A549 (cell line): ENCODE measurements at regions of chr21 and their contacts with region 1.

Region 1: GRCh38 chr21:44958471-44959191 is 18.8 kb downstream of the SLX9 start:
- DNase-seq: no peak
- ATAC-seq: no peak
- H3K4me3 ChIP-seq: no peak overlapping the region
- H3K27ac ChIP-seq: no peak overlapping the region
- H3K4me1 ChIP-seq: no peaks in the 10 kb centered on the region
- CTCF ChIP-seq: no peak
- EP300 ChIP-seq: no peak
- POLR2A ChIP-seq: no peak
- RAD21 ChIP-seq: no peak

Region 2: GRCh38 chr21:44972821-44973220 is 14.2 kb after region 1 on chr21:
- CTCF ChIA-PET with region 1: interaction called, 10 read pairs
- POLR2A ChIA-PET with region 1: no interaction called
- DNase-seq: peak in 1 of 2 experiments; percentile 22
- ATAC-seq: peak; percentile 38 to 44; a peak in 3 of 6 replicates
- H3K4me3 ChIP-seq: no peak overlapping the region
- H3K27ac ChIP-seq: peak overlapping the region; percentile 14 to 66; a peak in 3 of 6 replicates
- H3K4me1 ChIP-seq: peaks cover 16% of the 10 kb centered on the region
- CTCF ChIP-seq: no peak
- EP300 ChIP-seq: no peak
- POLR2A ChIP-seq: no peak
- RAD21 ChIP-seq: no peak

Region 3: DNA sequence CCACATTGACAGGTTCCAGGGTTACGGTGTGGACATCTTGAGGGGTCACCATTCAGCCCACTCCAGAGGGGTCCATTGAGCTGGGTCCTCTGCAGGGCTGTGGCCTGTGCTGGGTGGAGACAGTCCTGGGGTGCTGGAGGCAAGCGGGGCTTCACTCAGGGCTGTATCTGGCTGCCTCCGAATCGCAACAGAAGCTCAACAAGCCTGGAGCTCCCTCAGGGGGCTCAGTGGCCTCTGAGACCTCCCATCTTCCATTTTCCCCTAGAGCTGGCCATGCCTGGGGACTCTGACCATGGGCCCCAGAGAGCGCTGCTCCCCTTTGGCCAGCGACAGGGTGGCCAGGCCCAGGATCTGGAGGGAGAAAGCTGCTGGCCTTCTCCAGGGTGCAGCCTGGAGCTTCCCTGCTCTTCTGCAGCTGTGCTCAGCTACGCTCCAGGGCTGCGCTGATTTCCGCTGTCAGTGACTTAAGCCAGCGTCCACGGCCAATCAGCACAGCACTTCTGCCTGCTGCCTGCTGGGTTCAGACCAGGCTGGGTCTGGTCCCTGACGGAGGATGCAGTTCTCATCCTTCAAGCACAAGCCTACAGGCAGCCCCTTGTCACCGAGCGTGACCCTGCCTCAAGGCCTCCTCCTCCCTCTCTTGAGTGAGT is 70.8 kb after region 1 on chr21:
- CTCF ChIA-PET with region 1: no interaction called
- POLR2A ChIA-PET with region 1: no interaction called
- DNase-seq: no peak
- ATAC-seq: no peak; a peak in 1 of 6 replicates
- H3K4me3 ChIP-seq: no peak overlapping the region
- H3K27ac ChIP-seq: no peak overlapping the region
- H3K4me1 ChIP-seq: no peaks in the 10 kb centered on the region
- CTCF ChIP-seq: no peak
- EP300 ChIP-seq: no peak
- POLR2A ChIP-seq: no peak
- RAD21 ChIP-seq: no peak